Stomach (tissue), 19 donors: ENCODE measurements at regions of chr5 and their contacts with region 1.

Region 1: GRCh38 chr5:174951146-174951780 is 226.9 kb downstream of the MSX2 start:
- DNase-seq: peak; percentile 57 to 92
- H3K4me3 ChIP-seq: no peak overlapping the region
- H3K27ac ChIP-seq: no peak overlapping the region
- H3K4me1 ChIP-seq: no peaks in the 10 kb centered on the region
- H3K27me3 ChIP-seq: peaks cover 0 to 23% (median 0%) of the 10 kb centered on the region in 3 donors
- CTCF ChIP-seq: peak in 5 of 7 experiments; percentile 75 to 90 (median 80)
- EP300 ChIP-seq: no peak
- POLR2A ChIP-seq: no peak

Region 2: DNA sequence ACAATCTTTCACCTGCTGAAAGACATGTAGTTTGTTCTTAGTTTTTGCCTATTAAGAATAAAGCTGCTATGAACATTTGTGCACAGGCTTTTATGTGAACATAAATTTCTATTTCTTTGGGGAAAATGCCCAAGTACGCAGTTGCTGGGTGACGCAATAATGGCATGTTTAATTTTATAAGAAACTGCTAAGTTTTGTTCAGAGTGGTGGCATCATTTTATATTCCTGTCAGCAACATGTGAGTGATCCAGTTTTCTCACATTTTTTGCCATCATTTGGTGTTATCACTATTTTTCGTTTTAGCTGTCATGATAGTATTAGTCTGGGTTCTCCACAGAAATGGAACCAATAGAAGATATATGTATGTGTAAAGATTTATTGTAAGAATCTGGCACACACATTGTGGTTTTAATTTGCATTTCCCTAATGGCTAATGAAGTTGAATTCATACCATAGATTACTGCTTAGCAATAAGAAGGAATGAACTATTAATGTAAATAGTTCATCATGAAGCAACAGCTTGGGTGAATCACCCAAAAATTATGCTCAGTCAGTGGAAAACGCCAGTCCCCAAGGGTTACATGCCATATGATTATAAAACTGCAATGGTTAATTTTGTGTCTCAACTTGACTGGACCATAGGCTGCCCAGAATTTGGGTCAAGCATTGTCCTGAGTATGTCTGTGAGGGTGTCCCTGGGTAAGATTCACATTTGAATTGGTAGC is 131.8 kb after region 1 on chr5:
- intact Hi-C with region 1: no loop called
- DNase-seq: no peak
- H3K4me3 ChIP-seq: no peak overlapping the region
- H3K27ac ChIP-seq: no peak overlapping the region
- H3K4me1 ChIP-seq: peaks cover 0 to 4% (median 0%) of the 10 kb centered on the region in 4 donors
- H3K27me3 ChIP-seq: no peaks in the 10 kb centered on the region
- CTCF ChIP-seq: no peak
- EP300 ChIP-seq: no peak
- POLR2A ChIP-seq: no peak

Region 3: DNA sequence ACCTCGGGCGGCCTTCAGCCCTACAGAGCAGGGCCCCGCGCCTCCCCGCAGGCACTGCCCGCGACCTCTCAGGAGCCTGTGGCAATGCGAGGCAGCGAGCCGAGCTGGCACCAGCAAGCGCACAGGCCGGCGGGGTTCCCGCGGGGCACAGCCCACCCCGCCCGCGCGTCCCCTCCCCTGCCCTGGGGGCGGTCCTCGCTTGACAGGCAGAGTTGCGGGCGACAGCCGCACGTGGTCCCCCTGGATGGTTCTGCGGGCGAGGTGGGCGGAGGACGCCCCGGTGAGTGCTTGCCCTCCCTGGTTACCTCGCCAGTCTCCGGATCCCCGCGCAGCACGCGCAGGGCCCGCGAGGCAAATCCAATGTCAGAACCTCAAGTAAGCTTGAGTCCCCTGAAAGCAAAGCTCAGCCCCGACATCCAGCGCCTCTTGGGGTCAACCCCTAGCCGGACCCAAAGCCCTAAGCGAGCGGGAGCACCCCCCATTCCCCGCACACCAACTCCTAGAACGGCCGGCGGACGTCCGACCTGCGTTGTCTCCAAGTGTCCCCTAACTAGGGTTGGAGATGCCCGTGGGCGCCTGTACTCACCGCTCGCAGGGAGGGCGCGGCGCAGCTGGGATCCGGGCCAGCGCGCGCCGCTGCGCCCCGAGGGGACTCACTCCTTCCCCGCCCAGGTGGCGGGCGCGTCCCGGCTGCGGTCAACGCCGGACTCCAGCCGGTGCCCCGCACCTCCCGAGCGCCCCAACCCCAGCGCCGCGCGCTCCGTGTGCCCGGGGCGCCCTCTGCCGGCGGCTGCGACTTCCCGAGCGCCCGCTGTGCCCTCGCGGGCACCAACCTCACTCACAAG is 493.0 kb after region 1 on chr5 and contains the start of gene DRD1:
- intact Hi-C with region 1: loop called (anchors 5 kb)
- DNase-seq: peak; percentile 57 to 74
- H3K4me3 ChIP-seq: peak within 1 kb of the TSS; percentile 38 to 52 (median 46)
- H3K27ac ChIP-seq: peak within 1 kb of the TSS in 1 of 5 donors; percentile 3
- H3K4me1 ChIP-seq: peaks cover 14 to 22% (median 18%) of the 10 kb centered on the region in 4 donors
- H3K27me3 ChIP-seq: peaks cover 0 to 73% (median 44%) of the 10 kb centered on the region in 3 donors
- CTCF ChIP-seq: peak in 4 of 7 experiments; percentile 32 to 81 (median 68)
- EP300 ChIP-seq: no peak
- POLR2A ChIP-seq: no peak
- total RNA-seq, gene DRD1: 0.55 TPM in 1 of 5 donors, not detected in the others